ENCODE measurements at regions of chr11 and their contacts with region 1.

Region 1: DNA sequence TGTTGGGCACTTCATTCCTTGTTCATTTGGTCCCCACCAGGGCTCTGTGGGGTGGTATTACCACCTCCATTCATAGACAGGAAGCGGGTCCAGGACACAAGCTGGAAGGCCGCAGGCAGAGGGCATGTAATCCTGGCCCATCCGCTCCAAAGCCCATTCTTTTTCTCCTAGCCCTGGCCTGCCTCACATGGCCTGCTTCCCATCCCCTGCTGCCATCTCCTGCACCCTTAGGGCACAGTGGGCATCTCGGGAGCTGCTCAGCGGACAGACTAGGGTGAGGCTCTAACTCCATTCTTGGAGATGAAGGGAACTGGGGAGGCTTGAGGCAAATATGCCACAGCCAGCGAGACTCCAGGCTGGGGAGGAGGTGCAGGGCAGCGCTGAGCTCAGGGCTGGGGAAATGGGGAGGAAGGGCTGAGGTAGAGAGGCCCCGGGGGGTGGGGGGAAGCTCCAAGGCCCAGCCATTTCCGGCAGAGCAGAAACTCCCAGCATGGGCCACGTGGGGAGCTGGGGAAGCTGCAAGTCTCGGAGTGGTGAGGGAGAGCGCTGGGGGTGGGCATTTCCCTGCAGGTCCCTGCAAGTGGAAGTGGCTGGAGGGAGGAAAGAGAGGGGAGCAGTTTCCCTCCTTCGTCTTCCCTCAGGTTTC is 14.3 kb upstream of the BCL9L start:
- DNase-seq: peak in 2 of 3 donors; percentile 64 to 67
- H3K4me3 ChIP-seq: peak overlapping the region in 4 of 7 experiments; percentile 4 to 49 (median 24)
- H3K27ac ChIP-seq: no peak overlapping the region
- H3K4me1 ChIP-seq: peaks cover 0 to 23% (median 19%) of the 10 kb centered on the region in 4 experiments
- H3K27me3 ChIP-seq: no peaks in the 10 kb centered on the region

Region 2: DNA sequence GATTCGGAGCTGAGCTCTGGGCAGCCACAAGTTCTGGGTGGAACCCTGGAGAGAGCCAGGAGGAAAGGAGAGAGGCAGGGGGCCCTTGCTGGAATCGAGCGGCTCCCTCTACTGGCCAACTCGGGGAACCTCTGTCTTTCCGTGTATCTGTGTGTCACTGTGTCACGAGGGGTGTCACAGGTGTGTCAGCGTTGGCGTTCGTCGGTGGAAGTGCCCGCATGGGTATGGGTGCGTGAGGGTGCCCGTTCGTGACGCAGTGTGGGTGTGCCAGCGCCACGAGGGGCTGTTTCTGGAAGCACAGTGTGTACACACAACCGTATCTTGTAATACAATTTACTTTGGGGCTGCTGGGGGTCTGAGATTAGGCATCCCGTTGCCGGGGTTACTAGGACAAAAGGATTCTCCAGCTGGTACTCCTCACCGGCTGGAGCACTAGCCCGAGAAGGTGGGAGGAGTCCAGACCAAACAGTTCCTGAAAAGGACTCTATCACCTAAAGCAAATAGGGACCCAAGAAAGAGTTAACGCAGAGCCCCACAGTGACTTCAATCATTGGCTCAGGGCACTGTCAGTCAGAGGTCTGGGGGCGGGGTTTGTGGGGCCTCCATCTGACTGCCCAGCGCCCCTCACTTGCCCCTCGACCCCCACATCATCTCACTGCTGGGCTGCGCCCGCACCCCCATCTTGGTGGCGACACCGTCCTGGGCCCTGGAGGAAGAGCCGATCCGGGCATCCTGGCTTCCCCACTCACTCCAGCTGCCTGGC is 11.8 kb before region 1 on chr11:
- CTCF ChIA-PET with region 1: interaction called, 18 read pairs
- POLR2A ChIA-PET with region 1: no interaction called
- DNase-seq: peak; percentile 92 to 95 (median 94)
- H3K4me3 ChIP-seq: peak overlapping the region; percentile 66 to 93 (median 82)
- H3K27ac ChIP-seq: peak overlapping the region; percentile 76 to 93
- H3K4me1 ChIP-seq: peaks cover 5 to 75% (median 51%) of the 10 kb centered on the region in 4 experiments
- H3K27me3 ChIP-seq: no peaks in the 10 kb centered on the region

Measured in common myeloid progenitor, CD34-positive (primary cell).